ENCODE measurements at regions of chr10 and their contacts with region 1.

Region 1: GRCh38 chr10:69451209-69451783 is at the start of gene TSPAN15:
- DNase-seq: peak; percentile 92
- H3K4me3 ChIP-seq: peak within 1 kb of the TSS; percentile 60 to 73
- H3K27ac ChIP-seq: peak within 1 kb of the TSS; percentile 84 to 88
- H3K4me1 ChIP-seq: peaks cover 6% of the 10 kb centered on the region
- H3K27me3 ChIP-seq: no peaks in the 10 kb centered on the region
- CTCF ChIP-seq: peak in 2 of 4 experiments; percentile 31 to 61
- POLR2A ChIP-seq: peak; percentile 85
- total RNA-seq, gene TSPAN15: 78.8 to 85.3 TPM

Region 2: DNA sequence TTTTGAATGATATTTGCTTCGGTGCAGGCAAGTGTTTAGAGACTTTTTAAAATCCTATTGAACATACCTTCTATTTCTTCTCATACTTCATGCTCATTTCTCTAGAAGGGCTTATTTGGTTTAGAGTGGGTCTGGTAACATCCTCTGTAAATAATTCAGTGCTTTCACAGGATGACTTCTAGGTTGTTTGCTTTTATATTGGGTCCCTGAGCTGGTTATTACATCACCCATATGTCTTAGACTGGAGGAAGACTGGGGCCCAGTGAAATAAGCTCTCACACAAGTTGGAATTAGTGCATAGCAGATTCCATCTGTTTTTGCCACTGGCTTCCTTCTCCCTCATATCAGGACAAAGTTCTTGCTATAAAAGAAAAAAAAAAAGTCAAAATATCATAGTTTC is 264.8 kb before region 1 on chr10:
- intact Hi-C with region 1: no loop called
- DNase-seq: no peak
- H3K4me3 ChIP-seq: no peak overlapping the region
- H3K27ac ChIP-seq: no peak overlapping the region
- H3K4me1 ChIP-seq: peaks cover under 1% of the 10 kb centered on the region
- H3K27me3 ChIP-seq: no peaks in the 10 kb centered on the region
- CTCF ChIP-seq: no peak
- POLR2A ChIP-seq: no peak

Region 3: DNA sequence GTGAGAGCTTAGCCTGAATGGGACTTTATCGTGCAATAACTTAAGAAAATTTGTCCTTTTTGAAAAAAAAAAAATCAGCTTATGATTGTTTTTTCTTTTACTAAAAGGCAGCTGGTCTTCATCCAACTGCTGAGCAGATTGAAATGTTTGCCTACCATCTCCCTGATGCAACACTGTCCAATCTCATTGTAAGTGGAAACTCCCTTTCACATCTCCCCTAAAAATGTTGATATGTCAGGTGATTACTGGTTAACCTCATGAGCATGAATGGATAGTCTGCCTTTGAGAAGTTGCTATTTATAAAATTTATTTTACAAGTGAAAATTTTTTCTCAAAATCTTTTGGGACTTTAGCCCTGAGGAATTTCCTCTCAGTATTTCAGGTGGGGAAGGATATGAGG is 249.0 kb before region 1 on chr10:
- intact Hi-C with region 1: no loop called
- DNase-seq: no peak
- H3K4me3 ChIP-seq: no peak overlapping the region
- H3K27ac ChIP-seq: no peak overlapping the region
- H3K4me1 ChIP-seq: no peaks in the 10 kb centered on the region
- H3K27me3 ChIP-seq: no peaks in the 10 kb centered on the region
- CTCF ChIP-seq: no peak
- POLR2A ChIP-seq: no peak

Region 4: DNA sequence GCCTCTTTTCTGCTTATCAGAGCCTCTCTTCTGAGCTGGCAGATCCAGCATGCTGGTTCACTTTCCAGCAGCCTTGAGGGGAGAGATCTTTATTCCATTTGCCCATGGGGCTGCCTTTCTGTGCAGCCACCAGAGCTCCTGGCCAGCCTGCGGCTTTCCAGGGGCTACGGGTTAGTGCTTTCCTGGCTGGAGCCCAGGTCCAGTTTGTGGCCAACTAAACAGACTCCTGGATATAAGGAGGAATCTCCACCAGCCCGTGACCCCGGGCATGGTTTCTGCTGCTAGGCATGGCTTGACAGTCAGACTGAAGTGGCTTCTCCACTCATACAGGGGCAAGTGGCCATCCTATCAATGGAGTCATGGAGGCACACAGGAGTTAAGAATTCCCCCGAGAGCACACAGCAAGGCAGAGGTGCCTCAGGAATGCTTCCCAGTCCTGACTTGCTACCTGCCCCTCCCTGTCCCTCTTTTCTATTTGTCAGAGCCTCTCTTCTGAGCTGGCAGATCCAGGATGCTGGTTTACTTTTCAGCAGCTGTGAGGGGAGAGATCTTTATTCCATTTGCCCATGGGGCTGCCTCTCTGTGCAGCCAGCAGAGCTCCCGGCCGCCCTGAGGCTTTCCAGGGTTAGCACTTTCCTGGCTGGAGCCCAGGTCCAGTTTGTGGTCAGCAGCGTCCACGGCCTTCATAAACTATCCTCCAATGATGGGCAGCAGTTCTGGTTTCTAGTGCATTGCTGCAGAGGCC is 35.8 kb after region 1 on chr10:
- intact Hi-C with region 1: loop called (anchors 5 kb)
- DNase-seq: no peak
- H3K4me3 ChIP-seq: no peak overlapping the region
- H3K27ac ChIP-seq: peak overlapping the region; percentile 4 to 8
- H3K4me1 ChIP-seq: no peaks in the 10 kb centered on the region
- H3K27me3 ChIP-seq: no peaks in the 10 kb centered on the region
- CTCF ChIP-seq: no peak
- POLR2A ChIP-seq: no peak